ENCODE measurements at regions of chr11 and their contacts with region 1.

Region 1: GRCh38 chr11:37124384-37124783 is 526.3 kb upstream of the RAG2 start:
- DNase-seq: no peak
- H3K4me3 ChIP-seq: no peak overlapping the region
- H3K27ac ChIP-seq: no peak overlapping the region
- H3K4me1 ChIP-seq: no peaks in the 10 kb centered on the region
- H3K27me3 ChIP-seq: no peaks in the 10 kb centered on the region
- CTCF ChIP-seq: no peak

Region 2: GRCh38 chr11:37203006-37203405 is 78.6 kb after region 1 on chr11:
- intact Hi-C with region 1: loop called (anchors 10 kb)
- DNase-seq: no peak
- H3K4me3 ChIP-seq: no peak overlapping the region
- H3K27ac ChIP-seq: no peak overlapping the region
- H3K4me1 ChIP-seq: no peaks in the 10 kb centered on the region
- H3K27me3 ChIP-seq: no peaks in the 10 kb centered on the region
- CTCF ChIP-seq: no peak

Measured in left ventricle myocardium inferior (tissue), 1 donor.